Sigmoid colon (tissue), 7 donors: ENCODE measurements at regions of chr16 and their contacts with region 1.

Region 1: GRCh38 chr16:11133344-11133943 is 122.6 kb downstream of the SOCS1 start:
- DNase-seq: peak; percentile 95
- H3K4me3 ChIP-seq: no peak overlapping the region
- H3K27ac ChIP-seq: peak overlapping the region; percentile 78 to 86 (median 82)
- H3K4me1 ChIP-seq: peaks cover 0 to 68% (median 59%) of the 10 kb centered on the region in 4 donors
- H3K27me3 ChIP-seq: no peaks in the 10 kb centered on the region
- CTCF ChIP-seq: no peak
- EP300 ChIP-seq: peak in 1 of 4 donors; percentile 58
- POLR2A ChIP-seq: no peak

Region 2: GRCh38 chr16:11094072-11094856 is 39.2 kb before region 1 on chr16:
- intact Hi-C with region 1: loop called (anchors 5 kb)
- DNase-seq: peak; percentile 79
- H3K4me3 ChIP-seq: no peak overlapping the region
- H3K27ac ChIP-seq: peak overlapping the region; percentile 56 to 80 (median 79)
- H3K4me1 ChIP-seq: peaks cover 0 to 50% (median 44%) of the 10 kb centered on the region in 4 donors
- H3K27me3 ChIP-seq: no peaks in the 10 kb centered on the region
- CTCF ChIP-seq: no peak
- EP300 ChIP-seq: no peak
- POLR2A ChIP-seq: no peak